WTC11 (cell line): ENCODE measurements at regions of chr15 and their contacts with region 1.

Region 1: DNA sequence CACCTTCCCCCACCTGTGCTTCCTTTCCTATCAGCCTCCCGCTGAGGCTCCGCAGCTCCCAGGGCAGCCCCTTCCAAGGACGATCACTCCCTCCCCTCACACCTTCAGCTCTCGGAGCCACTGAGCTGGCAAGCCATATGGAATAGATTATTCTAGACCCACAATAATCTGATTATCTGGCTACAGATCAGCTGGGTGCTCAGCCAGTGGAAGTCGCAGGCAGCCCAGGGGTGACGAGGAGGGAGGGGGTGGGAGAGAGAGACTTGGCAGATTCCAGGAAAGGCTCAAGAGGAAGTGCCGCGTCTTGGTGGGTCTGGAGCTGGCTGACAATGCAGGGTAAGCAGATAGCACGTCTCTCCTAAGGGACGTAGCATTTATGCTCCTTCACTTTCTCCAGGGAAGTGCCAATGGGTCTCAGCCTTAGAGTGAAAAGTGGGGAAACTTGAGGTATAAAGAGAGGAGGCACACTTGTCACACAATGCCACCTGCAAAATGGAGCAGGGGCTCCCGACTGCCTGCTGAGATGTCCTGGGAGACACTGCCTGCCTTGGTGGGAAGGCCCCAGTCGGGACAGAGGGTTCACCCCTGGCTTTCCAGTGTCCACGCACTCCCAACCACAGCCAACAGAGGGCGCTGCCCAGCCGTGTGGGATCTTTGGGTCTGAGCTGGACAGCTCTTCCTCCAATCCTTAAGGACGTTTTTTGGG is 9.4 kb upstream of the MESP1 start:
- DNase-seq: peak; percentile 94
- ATAC-seq: peak; percentile 98
- H3K4me3 Mint-ChIP-seq: no peak overlapping the region
- H3K27ac Mint-ChIP-seq: no peak overlapping the region
- H3K4me1 Mint-ChIP-seq: peaks cover 13% of the 10 kb centered on the region
- H3K27me3 Mint-ChIP-seq: peaks cover 8% of the 10 kb centered on the region
- CTCF ChIP-seq: peak; percentile 97

Region 2: GRCh38 chr15:89673165-89673512 is 87.3 kb before region 1 on chr15:
- CTCF ChIA-PET with region 1: interaction called, 14 read pairs
- POLR2A ChIA-PET with region 1: no interaction called
- DNase-seq: peak; percentile 86
- ATAC-seq: peak; percentile 96
- H3K4me3 Mint-ChIP-seq: no peak overlapping the region
- H3K27ac Mint-ChIP-seq: no peak overlapping the region
- H3K4me1 Mint-ChIP-seq: no peaks in the 10 kb centered on the region; the same call in 1 of the 2 replicates
- H3K27me3 Mint-ChIP-seq: peaks cover 2% of the 10 kb centered on the region; the same call in 1 of the 2 replicates
- CTCF ChIP-seq: peak; percentile 67

Region 3: DNA sequence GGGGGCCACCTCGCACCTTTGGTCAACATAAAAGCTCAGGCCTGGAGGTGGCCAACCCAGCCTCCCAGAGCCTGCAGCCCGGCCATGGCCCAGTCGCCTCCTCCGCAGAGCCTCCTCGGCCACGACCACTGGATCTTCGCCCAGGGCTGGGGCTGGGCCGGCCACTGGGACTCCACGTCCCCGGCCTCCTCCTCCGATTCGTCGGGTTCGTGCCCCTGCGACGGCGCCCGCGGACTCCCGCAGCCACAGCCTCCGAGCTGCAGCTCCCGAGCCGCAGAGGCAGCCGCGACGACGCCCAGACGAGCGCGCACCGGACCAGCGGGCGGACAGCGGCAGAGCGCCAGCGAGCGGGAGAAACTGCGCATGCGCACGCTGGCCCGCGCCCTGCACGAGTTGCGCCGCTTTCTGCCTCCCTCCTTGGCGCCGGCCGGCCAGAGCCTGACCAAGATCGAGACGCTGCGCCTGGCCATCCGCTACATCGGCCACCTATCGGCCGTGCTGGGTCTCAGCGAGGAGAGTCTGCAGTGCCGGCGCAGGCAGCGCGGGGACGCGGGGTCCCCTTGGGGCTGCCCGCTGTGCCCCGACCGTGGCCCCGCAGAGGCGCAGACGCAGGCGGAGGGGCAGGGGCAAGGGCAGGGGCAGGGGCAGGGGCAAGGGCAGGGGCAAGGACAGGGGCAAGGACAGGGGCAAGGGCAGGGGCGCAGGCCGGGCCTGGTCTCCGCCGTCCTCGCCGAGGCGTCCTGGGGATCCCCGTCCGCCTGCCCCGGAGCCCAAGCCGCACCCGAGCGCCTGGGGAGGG is 16.0 kb after region 1 on chr15 and contains the start of gene MESP2:
- CTCF ChIA-PET with region 1: interaction called, 63 read pairs
- POLR2A ChIA-PET with region 1: no interaction called
- DNase-seq: peak; percentile 91
- ATAC-seq: peak; percentile 96
- H3K4me3 Mint-ChIP-seq: peak within 1 kb of the TSS; percentile 60
- H3K27ac Mint-ChIP-seq: no peak within 1 kb of the TSS
- H3K4me1 Mint-ChIP-seq: 0 out of 2 replicates have a peak, but pooled peaks cover 2% of the 10 kb centered on the region
- H3K27me3 Mint-ChIP-seq: peaks cover 42% of the 10 kb centered on the region
- CTCF ChIP-seq: no peak
- total RNA-seq, gene MESP2: 0.66 to 1.0 TPM (median 0.68 TPM) in 3 replicates

Region 4: DNA sequence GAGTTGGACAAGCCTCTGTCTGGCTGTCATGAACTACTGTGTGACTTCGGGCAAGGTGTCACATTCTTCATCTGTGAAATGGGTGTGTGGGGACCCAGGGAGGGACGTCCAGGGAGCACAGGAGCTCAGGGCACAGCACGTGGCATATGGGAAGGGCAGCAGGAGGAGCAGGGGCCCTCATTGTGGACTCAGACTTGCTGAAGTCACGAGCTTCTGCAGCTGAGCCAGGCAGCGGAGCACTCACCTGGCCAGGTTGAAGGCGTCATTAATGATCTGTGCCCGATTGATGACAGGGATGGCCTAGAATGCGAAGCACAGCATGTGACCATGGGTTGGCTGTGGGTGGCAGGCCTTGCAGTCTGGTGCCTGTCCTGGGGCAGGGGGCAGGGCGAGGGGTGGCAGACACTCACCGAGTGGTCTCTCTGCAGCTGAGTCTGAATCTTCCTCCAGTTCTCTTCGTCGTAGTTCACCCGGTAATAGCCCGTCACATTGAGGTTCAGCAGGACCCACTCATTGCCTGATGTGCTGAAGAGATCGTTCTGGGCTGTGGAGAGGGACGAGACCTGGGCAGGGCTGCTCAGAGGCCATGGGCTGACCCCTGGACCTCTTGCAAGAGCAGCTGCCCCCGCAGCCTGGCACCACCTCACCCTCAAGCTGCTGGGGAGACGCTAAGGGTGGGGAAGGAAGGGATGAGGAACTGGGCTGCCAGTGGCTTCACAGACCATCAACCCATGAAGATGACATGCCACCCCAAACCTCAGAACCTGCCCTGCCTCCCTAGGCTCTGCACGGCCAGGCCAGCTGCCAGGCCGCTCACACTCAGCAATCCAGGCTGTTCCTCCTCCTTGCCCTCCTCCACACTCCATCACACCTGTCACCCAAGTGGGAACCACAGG is 38.8 kb after region 1 on chr15:
- CTCF ChIA-PET with region 1: interaction called, 16 read pairs
- POLR2A ChIA-PET with region 1: no interaction called
- DNase-seq: no peak
- ATAC-seq: no peak
- H3K4me3 Mint-ChIP-seq: no peak overlapping the region
- H3K27ac Mint-ChIP-seq: no peak overlapping the region
- H3K4me1 Mint-ChIP-seq: no peaks in the 10 kb centered on the region
- H3K27me3 Mint-ChIP-seq: no peaks in the 10 kb centered on the region
- CTCF ChIP-seq: no peak

Region 5: DNA sequence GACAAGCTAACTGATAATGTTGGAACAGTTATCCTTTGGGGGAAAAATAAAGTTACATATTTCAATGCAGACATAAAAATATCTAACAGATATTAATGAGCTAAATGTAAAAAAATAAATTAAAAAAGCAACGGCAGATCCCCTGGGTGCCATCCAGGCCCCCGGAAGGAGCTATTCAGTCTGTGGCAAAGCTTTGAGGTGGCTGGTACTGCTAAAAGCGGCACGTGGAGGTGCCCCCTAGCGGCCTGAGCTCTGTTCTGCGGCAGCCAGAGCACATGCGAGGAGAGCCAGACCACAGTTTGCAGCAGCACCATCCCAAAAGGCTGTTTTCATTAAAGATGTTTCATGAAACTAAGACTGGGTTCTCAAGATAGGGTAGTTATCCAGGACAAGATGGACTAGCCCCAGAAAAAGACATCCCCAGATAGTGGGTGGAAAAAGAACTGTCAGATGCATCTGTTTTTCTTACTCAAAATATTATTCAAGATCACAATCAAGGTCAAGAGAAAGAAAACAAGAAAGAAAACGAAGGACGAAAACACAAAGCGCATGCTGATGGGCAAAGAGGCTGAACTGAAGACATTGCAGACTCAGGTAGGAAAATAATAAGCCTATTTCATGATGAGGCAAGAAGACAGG is 114.6 kb after region 1 on chr15:
- CTCF ChIA-PET with region 1: interaction called, 214 read pairs
- POLR2A ChIA-PET with region 1: interaction called, 5 read pairs
- DNase-seq: peak; percentile 85
- ATAC-seq: peak; percentile 96
- H3K4me3 Mint-ChIP-seq: no peak overlapping the region
- H3K27ac Mint-ChIP-seq: peak overlapping the region; percentile 17
- H3K4me1 Mint-ChIP-seq: no peaks in the 10 kb centered on the region
- H3K27me3 Mint-ChIP-seq: no peaks in the 10 kb centered on the region
- CTCF ChIP-seq: peak; percentile 82

Region 6: DNA sequence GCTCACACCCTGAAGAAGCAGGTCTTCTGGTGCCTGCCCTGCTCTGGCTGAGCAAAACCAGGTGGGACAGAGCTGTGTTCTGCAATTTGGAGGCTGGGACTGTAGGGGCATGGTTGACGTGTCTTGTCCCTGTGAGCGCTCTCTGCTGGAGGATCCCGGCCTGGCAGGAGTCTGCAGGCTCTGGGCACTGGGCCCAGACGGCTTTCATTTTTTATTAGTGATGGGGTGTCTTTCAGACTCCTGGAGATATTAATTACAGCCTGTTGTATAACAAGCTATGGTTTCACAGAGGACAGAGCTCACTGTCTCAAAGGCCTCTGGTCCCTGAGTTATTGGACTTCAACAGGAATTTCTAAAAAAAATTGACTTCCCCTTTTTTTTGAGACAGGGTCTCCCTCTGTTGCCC is 211.1 kb after region 1 on chr15:
- CTCF ChIA-PET with region 1: interaction called, 10 read pairs
- POLR2A ChIA-PET with region 1: no interaction called
- DNase-seq: peak; percentile 88
- ATAC-seq: peak; percentile 100
- H3K4me3 Mint-ChIP-seq: no peak overlapping the region
- H3K27ac Mint-ChIP-seq: no peak overlapping the region
- H3K4me1 Mint-ChIP-seq: no peaks in the 10 kb centered on the region
- H3K27me3 Mint-ChIP-seq: peaks cover 12% of the 10 kb centered on the region
- CTCF ChIP-seq: peak; percentile 61; the same call in 1 of the 2 replicates

Region 7: DNA sequence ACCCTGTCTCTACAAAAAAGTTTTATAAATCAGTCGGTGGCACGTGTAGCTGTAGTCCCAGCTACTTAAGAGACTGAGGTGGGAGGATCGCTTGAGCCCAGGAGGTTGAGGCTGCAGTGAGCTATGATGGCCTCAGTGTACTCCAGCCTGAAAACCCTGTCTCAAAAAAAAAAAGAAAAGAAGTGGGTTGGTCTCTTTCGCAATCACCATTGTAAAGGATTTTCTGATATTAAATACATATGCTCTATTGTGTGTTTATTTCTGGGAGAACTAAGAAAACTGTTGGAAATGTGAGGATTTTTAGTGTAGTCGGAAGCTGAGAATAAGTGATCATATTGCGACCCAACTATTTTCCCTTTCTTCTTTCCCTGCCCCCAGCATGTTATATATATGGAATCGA is 248.2 kb after region 1 on chr15:
- CTCF ChIA-PET with region 1: no interaction called
- POLR2A ChIA-PET with region 1: no interaction called
- DNase-seq: no peak
- ATAC-seq: no peak
- H3K4me3 Mint-ChIP-seq: no peak overlapping the region
- H3K27ac Mint-ChIP-seq: no peak overlapping the region
- H3K4me1 Mint-ChIP-seq: peaks cover 40% of the 10 kb centered on the region
- H3K27me3 Mint-ChIP-seq: peaks cover 5% of the 10 kb centered on the region
- CTCF ChIP-seq: no peak